AG04450 (cell line): ENCODE measurements at regions of chr2 and their contacts with region 1.

Region 1: GRCh38 chr2:160736148-160737030 is 242.8 kb upstream of the RBMS1 start:
- DNase-seq: no peak
- H3K4me3 ChIP-seq: no peak overlapping the region
- H3K27ac ChIP-seq: no peak overlapping the region
- H3K27me3 ChIP-seq: no peaks in the 10 kb centered on the region
- CTCF ChIP-seq: no peak

Region 2: GRCh38 chr2:160091381-160091780 is 645.0 kb before region 1 on chr2:
- CTCF ChIA-PET with region 1: interaction called, 10 read pairs
- POLR2A ChIA-PET with region 1: no interaction called
- DNase-seq: no peak
- H3K4me3 ChIP-seq: no peak overlapping the region
- H3K27ac ChIP-seq: no peak overlapping the region
- H3K27me3 ChIP-seq: no peaks in the 10 kb centered on the region
- CTCF ChIP-seq: no peak

Region 3: DNA sequence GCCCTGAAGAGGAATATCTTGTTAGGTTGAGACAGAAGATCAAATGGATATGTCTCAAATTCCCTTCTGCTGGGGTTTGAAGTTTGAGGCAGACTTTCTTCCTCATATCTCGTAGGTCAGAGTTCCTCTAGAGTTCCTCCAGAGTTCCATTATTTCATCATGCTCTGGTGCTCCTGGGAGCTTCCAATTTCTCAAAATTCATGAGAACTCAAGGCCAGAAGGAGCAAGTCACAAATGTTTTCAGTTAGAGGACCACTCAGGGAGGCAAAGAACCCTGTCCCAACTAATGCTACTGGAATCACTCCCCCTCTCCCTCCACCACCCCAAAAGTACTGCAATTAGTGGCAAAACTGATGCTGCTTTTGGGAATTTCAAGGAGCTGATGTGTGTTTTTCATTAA is 127.0 kb before region 1 on chr2:
- CTCF ChIA-PET with region 1: no interaction called
- POLR2A ChIA-PET with region 1: no interaction called
- DNase-seq: no peak
- H3K4me3 ChIP-seq: no peak overlapping the region
- H3K27ac ChIP-seq: no peak overlapping the region
- H3K27me3 ChIP-seq: no peaks in the 10 kb centered on the region
- CTCF ChIP-seq: no peak

Region 4: GRCh38 chr2:160784023-160784422 is 47.6 kb after region 1 on chr2:
- CTCF ChIA-PET with region 1: no interaction called
- POLR2A ChIA-PET with region 1: no interaction called
- DNase-seq: no peak
- H3K4me3 ChIP-seq: no peak overlapping the region
- H3K27ac ChIP-seq: no peak overlapping the region
- H3K27me3 ChIP-seq: no peaks in the 10 kb centered on the region
- CTCF ChIP-seq: no peak

Region 5: DNA sequence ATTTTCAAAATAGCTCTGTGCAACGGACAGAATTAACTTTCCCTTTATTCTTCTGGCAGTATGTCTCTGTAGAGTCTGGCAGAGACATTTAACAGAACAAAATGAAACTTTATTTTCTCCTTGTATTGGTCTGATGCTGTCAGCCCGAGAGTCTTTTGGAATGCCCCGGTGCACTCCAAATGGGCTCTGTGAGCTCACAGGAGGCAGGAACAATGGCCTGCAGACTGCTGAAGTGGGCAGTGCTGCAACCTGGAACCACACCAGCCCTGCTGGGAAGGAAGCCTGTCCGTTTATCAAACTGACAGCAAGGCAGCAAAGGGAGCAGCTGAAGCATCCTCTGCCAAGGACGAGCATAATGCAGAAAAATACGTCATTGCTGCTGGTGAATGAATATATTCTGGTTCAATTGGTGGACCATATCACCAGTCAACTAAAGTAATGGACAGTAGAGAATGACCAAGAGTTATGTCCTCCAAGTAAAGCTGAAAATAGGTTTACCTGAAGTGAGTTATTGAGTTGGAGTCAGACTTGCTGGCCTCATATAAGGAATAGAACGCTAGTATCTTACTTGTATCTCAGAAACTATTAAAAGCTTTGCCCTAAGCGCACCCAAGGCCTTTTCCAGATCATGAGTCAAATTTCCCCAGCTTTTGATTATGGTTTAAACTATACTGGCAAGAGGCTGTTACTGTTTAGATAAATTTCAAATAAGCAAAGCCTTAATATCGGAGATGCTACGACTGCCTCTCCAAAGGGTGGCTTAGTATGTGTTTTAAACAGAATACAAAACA is 216.3 kb after region 1 on chr2:
- CTCF ChIA-PET with region 1: no interaction called
- POLR2A ChIA-PET with region 1: no interaction called
- DNase-seq: peak; percentile 21
- H3K4me3 ChIP-seq: peak overlapping the region; percentile 37
- H3K27ac ChIP-seq: no peak overlapping the region
- H3K27me3 ChIP-seq: no peaks in the 10 kb centered on the region
- CTCF ChIP-seq: no peak